Ascending aorta (tissue), 2 donors: ENCODE measurements at regions of chr12 and their contacts with region 1.

Region 1: GRCh38 chr12:11648831-11649702 is at the start of gene ETV6:
- DNase-seq: peak in 1 of 2 donors; percentile 90
- H3K4me3 ChIP-seq: peak within 1 kb of the TSS; percentile 73 to 89
- H3K27ac ChIP-seq: peak within 1 kb of the TSS; percentile 85 to 95
- H3K4me1 ChIP-seq: peaks cover 3 to 5% of the 10 kb centered on the region in 2 donors
- H3K27me3 ChIP-seq: no peaks in the 10 kb centered on the region
- CTCF ChIP-seq: no peak
- total RNA-seq, gene ETV6: 21.6 TPM

Region 2: GRCh38 chr12:11695321-11695720 is 46.3 kb after region 1 on chr12:
- intact Hi-C with region 1: loop called (anchors 2 kb)
- DNase-seq: peak in 1 of 2 donors; percentile 81
- H3K4me3 ChIP-seq: no peak overlapping the region
- H3K27ac ChIP-seq: peak overlapping the region; percentile 29 to 48
- H3K4me1 ChIP-seq: peaks cover 3 to 46% of the 10 kb centered on the region in 2 donors
- H3K27me3 ChIP-seq: no peaks in the 10 kb centered on the region
- CTCF ChIP-seq: peak in 1 of 3 experiments; percentile 4

Region 3: GRCh38 chr12:11798856-11799501 is 149.9 kb after region 1 on chr12:
- intact Hi-C with region 1: loop called (anchors 10 kb)
- DNase-seq: no peak
- H3K4me3 ChIP-seq: no peak overlapping the region
- H3K27ac ChIP-seq: peak overlapping the region; percentile 80 to 91
- H3K4me1 ChIP-seq: peaks cover 19 to 34% of the 10 kb centered on the region in 2 donors
- H3K27me3 ChIP-seq: no peaks in the 10 kb centered on the region
- CTCF ChIP-seq: no peak

Region 4: DNA sequence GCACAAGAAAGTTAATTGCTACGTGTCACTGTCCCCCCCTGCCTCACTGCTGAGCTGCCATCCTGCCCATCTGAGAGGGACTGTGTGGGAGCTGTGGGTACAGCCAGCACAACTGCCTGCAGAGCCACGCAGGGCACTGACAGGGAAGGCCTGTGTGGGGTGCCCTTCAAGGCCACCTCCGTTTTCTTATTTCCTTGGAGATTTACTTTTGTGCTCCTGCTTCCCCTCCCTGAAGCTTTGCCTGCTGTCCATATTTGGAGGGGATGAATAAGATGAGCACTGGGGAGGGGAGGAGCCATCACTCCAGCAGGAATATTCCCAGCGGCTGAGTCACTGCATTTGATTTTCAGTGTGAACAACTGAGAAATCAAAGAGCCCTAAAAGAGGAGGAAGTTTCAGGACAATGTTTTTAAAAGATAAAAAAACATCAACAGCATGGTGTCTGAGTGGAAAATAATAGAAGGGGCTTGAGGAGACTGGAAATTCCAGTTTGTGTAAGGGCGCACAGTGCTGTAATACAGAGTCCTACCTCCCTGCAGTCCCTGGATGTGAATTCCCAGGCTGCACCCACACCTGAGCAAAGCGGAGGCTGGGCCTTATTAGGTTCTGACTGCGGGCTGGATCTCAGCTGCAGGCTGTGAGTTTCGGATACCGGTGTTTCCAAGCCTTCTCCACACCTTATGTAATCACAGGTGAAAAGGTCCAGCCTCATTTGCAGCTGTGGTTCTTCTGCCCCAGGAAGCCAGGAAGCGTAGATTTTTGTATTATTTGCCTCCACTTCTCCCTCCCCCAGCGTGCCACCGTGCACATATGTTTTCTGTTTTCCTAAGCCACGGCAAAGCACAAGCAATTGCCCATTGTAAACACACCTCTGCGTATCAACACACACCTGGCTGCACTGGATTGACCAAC is 229.1 kb after region 1 on chr12:
- intact Hi-C with region 1: loop called (anchors 5 kb)
- DNase-seq: peak in 1 of 2 donors; percentile 80
- H3K4me3 ChIP-seq: no peak overlapping the region
- H3K27ac ChIP-seq: peak overlapping the region; percentile 22 to 43
- H3K4me1 ChIP-seq: peaks cover 0 to 28% of the 10 kb centered on the region in 2 donors
- H3K27me3 ChIP-seq: no peaks in the 10 kb centered on the region
- CTCF ChIP-seq: no peak